ENCODE measurements at regions of chr10 and their contacts with region 1.

Region 1: GRCh38 chr10:117174439-117175214 is 22.7 kb upstream of the KCNK18 start:
- DNase-seq: peak; percentile 84
- ATAC-seq: peak; percentile 81
- H3K4me3 ChIP-seq: peak overlapping the region in 4 of 5 experiments; percentile 38 to 69 (median 54)
- H3K4me3 Mint-ChIP-seq: peak overlapping the region; percentile 91
- H3K27ac ChIP-seq: no peak overlapping the region
- H3K27ac Mint-ChIP-seq: peak overlapping the region; percentile 7
- H3K4me1 ChIP-seq: peaks cover 17 to 21% of the 10 kb centered on the region in 2 donors
- H3K4me1 Mint-ChIP-seq: peaks cover 16% of the 10 kb centered on the region
- H3K27me3 ChIP-seq: peaks cover 0 to 44% (median 28%) of the 10 kb centered on the region in 4 experiments
- H3K27me3 Mint-ChIP-seq: peaks cover 50% of the 10 kb centered on the region
- CTCF ChIP-seq: peak; percentile 81

Region 2: GRCh38 chr10:116683821-116684220 is 490.8 kb before region 1 on chr10:
- CTCF ChIA-PET with region 1: interaction called, 35 read pairs
- POLR2A ChIA-PET with region 1: no interaction called
- intact Hi-C with region 1: no loop called
- DNase-seq: no peak
- ATAC-seq: no peak
- H3K4me3 ChIP-seq: no peak overlapping the region
- H3K4me3 Mint-ChIP-seq: no peak overlapping the region
- H3K27ac ChIP-seq: no peak overlapping the region
- H3K27ac Mint-ChIP-seq: no peak overlapping the region
- H3K4me1 ChIP-seq: no peaks in the 10 kb centered on the region
- H3K4me1 Mint-ChIP-seq: no peaks in the 10 kb centered on the region
- H3K27me3 ChIP-seq: no peaks in the 10 kb centered on the region
- H3K27me3 Mint-ChIP-seq: peaks cover 5% of the 10 kb centered on the region
- CTCF ChIP-seq: no peak

Region 3: GRCh38 chr10:116787893-116788665 is 386.5 kb before region 1 on chr10:
- CTCF ChIA-PET with region 1: interaction called, 53 read pairs
- POLR2A ChIA-PET with region 1: no interaction called
- intact Hi-C with region 1: loop called (anchors 2 kb)
- DNase-seq: peak; percentile 61
- ATAC-seq: peak; percentile 78
- H3K4me3 ChIP-seq: peak overlapping the region in 1 of 5 experiments; percentile 45
- H3K4me3 Mint-ChIP-seq: peak overlapping the region; percentile 67
- H3K27ac ChIP-seq: no peak overlapping the region
- H3K27ac Mint-ChIP-seq: no peak overlapping the region
- H3K4me1 ChIP-seq: peaks cover 6 to 8% of the 10 kb centered on the region in 2 donors
- H3K4me1 Mint-ChIP-seq: peaks cover 6% of the 10 kb centered on the region
- H3K27me3 ChIP-seq: peaks cover 0 to 6% (median 0%) of the 10 kb centered on the region in 4 experiments
- H3K27me3 Mint-ChIP-seq: peaks cover 24% of the 10 kb centered on the region
- CTCF ChIP-seq: peak; percentile 99

Region 4: GRCh38 chr10:116796910-116797513 is 377.6 kb before region 1 on chr10:
- CTCF ChIA-PET with region 1: interaction called, 158 read pairs
- POLR2A ChIA-PET with region 1: no interaction called
- intact Hi-C with region 1: loop called (anchors 1 kb)
- DNase-seq: peak; percentile 66
- ATAC-seq: peak; percentile 49
- H3K4me3 ChIP-seq: no peak overlapping the region
- H3K4me3 Mint-ChIP-seq: no peak overlapping the region
- H3K27ac ChIP-seq: no peak overlapping the region
- H3K27ac Mint-ChIP-seq: no peak overlapping the region
- H3K4me1 ChIP-seq: no peaks in the 10 kb centered on the region
- H3K4me1 Mint-ChIP-seq: no peaks in the 10 kb centered on the region
- H3K27me3 ChIP-seq: no peaks in the 10 kb centered on the region
- H3K27me3 Mint-ChIP-seq: peaks cover 19% of the 10 kb centered on the region
- CTCF ChIP-seq: peak; percentile 79

Region 5: GRCh38 chr10:116836902-116837523 is 337.6 kb before region 1 on chr10:
- CTCF ChIA-PET with region 1: interaction called, 12 read pairs
- POLR2A ChIA-PET with region 1: no interaction called
- intact Hi-C with region 1: no loop called
- DNase-seq: no peak
- ATAC-seq: no peak
- H3K4me3 ChIP-seq: no peak overlapping the region
- H3K4me3 Mint-ChIP-seq: no peak overlapping the region
- H3K27ac ChIP-seq: no peak overlapping the region
- H3K27ac Mint-ChIP-seq: no peak overlapping the region
- H3K4me1 ChIP-seq: no peaks in the 10 kb centered on the region
- H3K4me1 Mint-ChIP-seq: peaks cover 19% of the 10 kb centered on the region
- H3K27me3 ChIP-seq: no peaks in the 10 kb centered on the region
- H3K27me3 Mint-ChIP-seq: no peaks in the 10 kb centered on the region
- CTCF ChIP-seq: no peak

Region 6: GRCh38 chr10:117186832-117187615 is 12.4 kb after region 1 on chr10:
- CTCF ChIA-PET with region 1: interaction called, 16 read pairs
- POLR2A ChIA-PET with region 1: no interaction called
- intact Hi-C with region 1: no loop called
- DNase-seq: no peak
- ATAC-seq: no peak
- H3K4me3 ChIP-seq: no peak overlapping the region
- H3K4me3 Mint-ChIP-seq: no peak overlapping the region
- H3K27ac ChIP-seq: no peak overlapping the region
- H3K27ac Mint-ChIP-seq: no peak overlapping the region
- H3K4me1 ChIP-seq: no peaks in the 10 kb centered on the region
- H3K4me1 Mint-ChIP-seq: no peaks in the 10 kb centered on the region
- H3K27me3 ChIP-seq: no peaks in the 10 kb centered on the region
- H3K27me3 Mint-ChIP-seq: no peaks in the 10 kb centered on the region
- CTCF ChIP-seq: no peak